Caco-2 (cell line): ENCODE measurements at regions of chr20 and their contacts with region 1.

Region 1: GRCh38 chr20:6492271-6493055 is 275.0 kb upstream of the BMP2 start:
- DNase-seq: peak; percentile 74 to 84
- H3K4me3 ChIP-seq: no peak overlapping the region
- H3K4me3 Mint-ChIP-seq: peak overlapping the region; percentile 6
- H3K27ac Mint-ChIP-seq: peak overlapping the region; percentile 87
- H3K4me1 ChIP-seq: peaks cover 54% of the 10 kb centered on the region
- H3K4me1 Mint-ChIP-seq: peaks cover 54% of the 10 kb centered on the region
- H3K27me3 ChIP-seq: no peaks in the 10 kb centered on the region
- H3K27me3 Mint-ChIP-seq: no peaks in the 10 kb centered on the region
- CTCF ChIP-seq: no peak

Region 2: DNA sequence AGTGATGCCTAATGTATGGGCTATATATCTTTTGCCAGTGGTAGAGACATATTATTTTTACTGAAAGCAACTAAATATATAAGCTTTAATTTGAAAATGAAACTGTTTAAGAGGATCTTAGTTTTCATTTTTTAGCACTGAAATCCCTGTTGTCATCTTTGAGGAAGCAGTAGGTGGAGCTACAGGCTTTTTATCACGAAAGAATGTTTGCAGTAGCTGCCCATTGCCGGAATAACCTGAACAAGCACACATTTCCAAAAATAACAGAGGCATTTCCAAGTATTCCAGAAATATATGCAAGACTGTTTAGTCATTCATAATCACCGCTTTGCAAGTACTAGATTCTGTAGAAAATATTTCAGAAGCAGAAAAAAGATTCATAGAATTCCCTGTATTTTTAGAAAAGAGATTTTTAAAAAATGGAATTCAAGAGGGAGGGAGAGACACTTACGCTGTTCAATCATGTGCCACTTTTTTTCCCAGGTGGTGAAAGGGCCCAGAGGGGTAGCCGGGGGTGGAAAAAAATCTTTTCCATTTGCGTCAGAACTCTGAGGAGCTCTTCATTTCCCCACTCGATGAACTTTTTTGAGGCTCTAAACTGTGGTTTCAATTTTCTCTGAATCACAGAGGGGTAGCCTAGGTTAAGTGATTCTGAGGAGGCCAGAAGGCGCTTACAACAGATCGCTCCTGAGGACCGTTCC is 227.1 kb before region 1 on chr20:
- CTCF ChIA-PET with region 1: no interaction called
- POLR2A ChIA-PET with region 1: no interaction called
- intact Hi-C with region 1: loop called (anchors 5 kb)
- DNase-seq: peak in 1 of 2 experiments; percentile 22
- H3K4me3 ChIP-seq: no peak overlapping the region
- H3K4me3 Mint-ChIP-seq: no peak overlapping the region
- H3K27ac Mint-ChIP-seq: no peak overlapping the region
- H3K4me1 ChIP-seq: no peaks in the 10 kb centered on the region
- H3K4me1 Mint-ChIP-seq: no peaks in the 10 kb centered on the region
- H3K27me3 ChIP-seq: no peaks in the 10 kb centered on the region; the same call in 1 of the 2 replicates
- H3K27me3 Mint-ChIP-seq: peaks cover 10% of the 10 kb centered on the region
- CTCF ChIP-seq: peak; percentile 48 to 62

Region 3: GRCh38 chr20:6480328-6481200 is 11.9 kb before region 1 on chr20:
- CTCF ChIA-PET with region 1: interaction called, 13 read pairs
- POLR2A ChIA-PET with region 1: interaction called, 3 read pairs
- intact Hi-C with region 1: loop called (anchors 1 kb)
- DNase-seq: peak in 1 of 2 experiments; percentile 61
- H3K4me3 ChIP-seq: no peak overlapping the region
- H3K4me3 Mint-ChIP-seq: no peak overlapping the region
- H3K27ac Mint-ChIP-seq: no peak overlapping the region
- H3K4me1 ChIP-seq: peaks cover 17% of the 10 kb centered on the region
- H3K4me1 Mint-ChIP-seq: peaks cover 13% of the 10 kb centered on the region
- H3K27me3 ChIP-seq: no peaks in the 10 kb centered on the region
- H3K27me3 Mint-ChIP-seq: no peaks in the 10 kb centered on the region
- CTCF ChIP-seq: no peak

Region 4: DNA sequence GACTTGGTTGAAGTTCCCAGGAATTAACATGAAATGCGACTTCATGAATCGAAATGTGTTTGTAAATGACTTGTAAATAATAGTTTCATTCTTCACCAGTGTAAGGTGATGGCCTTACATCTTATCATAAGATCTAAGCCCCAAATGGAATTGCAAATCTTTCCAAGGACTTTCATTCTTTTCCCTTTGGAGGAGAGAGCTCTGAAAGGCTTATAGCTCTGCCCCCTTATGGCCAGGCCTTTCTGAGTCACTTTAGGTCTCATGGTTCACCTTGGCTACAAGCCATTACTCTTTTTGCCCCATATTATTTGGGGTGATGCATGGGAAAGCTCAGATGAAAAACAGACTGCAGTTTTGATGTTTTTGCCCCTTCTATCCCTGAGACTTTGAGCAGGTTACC is 65.9 kb after region 1 on chr20:
- CTCF ChIA-PET with region 1: no interaction called
- POLR2A ChIA-PET with region 1: no interaction called
- intact Hi-C with region 1: loop called (anchors 1 kb)
- DNase-seq: peak in 1 of 2 experiments; percentile 25
- H3K4me3 ChIP-seq: no peak overlapping the region
- H3K4me3 Mint-ChIP-seq: no peak overlapping the region
- H3K27ac Mint-ChIP-seq: no peak overlapping the region
- H3K4me1 ChIP-seq: peaks cover 12% of the 10 kb centered on the region; the same call in 1 of the 2 replicates
- H3K4me1 Mint-ChIP-seq: no peaks in the 10 kb centered on the region
- H3K27me3 ChIP-seq: no peaks in the 10 kb centered on the region
- H3K27me3 Mint-ChIP-seq: no peaks in the 10 kb centered on the region
- CTCF ChIP-seq: peak; percentile 20 to 54

Region 5: GRCh38 chr20:6623989-6624388 is 131.5 kb after region 1 on chr20:
- CTCF ChIA-PET with region 1: no interaction called
- POLR2A ChIA-PET with region 1: interaction called, 3 read pairs
- intact Hi-C with region 1: loop called (anchors 2 kb)
- DNase-seq: peak; percentile 65 to 77
- H3K4me3 ChIP-seq: no peak overlapping the region
- H3K4me3 Mint-ChIP-seq: peak overlapping the region; percentile 51
- H3K27ac Mint-ChIP-seq: no peak overlapping the region
- H3K4me1 ChIP-seq: peaks cover 15% of the 10 kb centered on the region
- H3K4me1 Mint-ChIP-seq: no peaks in the 10 kb centered on the region
- H3K27me3 ChIP-seq: no peaks in the 10 kb centered on the region
- H3K27me3 Mint-ChIP-seq: no peaks in the 10 kb centered on the region
- CTCF ChIP-seq: no peak

Region 6: DNA sequence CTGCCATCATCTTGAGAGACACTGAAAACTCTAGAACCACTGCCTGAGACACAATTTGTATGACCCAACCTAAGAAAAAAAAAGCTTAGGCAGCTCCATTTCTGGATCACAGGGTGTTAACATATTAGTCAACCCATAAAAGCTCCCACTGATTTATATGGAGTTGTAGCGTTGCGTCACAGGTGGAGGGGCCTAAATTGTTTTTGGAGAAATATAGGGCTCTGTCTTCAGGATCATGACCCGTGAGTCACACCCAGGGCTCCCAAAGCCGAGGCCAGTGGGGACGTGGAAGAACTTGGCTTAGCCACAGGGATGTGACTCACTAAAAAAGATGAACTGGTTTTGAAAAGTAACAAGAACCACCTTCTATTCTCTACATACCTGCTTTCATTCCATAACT is 158.6 kb after region 1 on chr20:
- CTCF ChIA-PET with region 1: no interaction called
- POLR2A ChIA-PET with region 1: no interaction called
- intact Hi-C with region 1: no loop called
- DNase-seq: no peak
- H3K4me3 ChIP-seq: no peak overlapping the region
- H3K4me3 Mint-ChIP-seq: no peak overlapping the region
- H3K27ac Mint-ChIP-seq: no peak overlapping the region
- H3K4me1 ChIP-seq: peaks cover 9% of the 10 kb centered on the region; the same call in 1 of the 2 replicates
- H3K4me1 Mint-ChIP-seq: peaks cover 6% of the 10 kb centered on the region
- H3K27me3 ChIP-seq: no peaks in the 10 kb centered on the region
- H3K27me3 Mint-ChIP-seq: no peaks in the 10 kb centered on the region
- CTCF ChIP-seq: no peak

Region 7: DNA sequence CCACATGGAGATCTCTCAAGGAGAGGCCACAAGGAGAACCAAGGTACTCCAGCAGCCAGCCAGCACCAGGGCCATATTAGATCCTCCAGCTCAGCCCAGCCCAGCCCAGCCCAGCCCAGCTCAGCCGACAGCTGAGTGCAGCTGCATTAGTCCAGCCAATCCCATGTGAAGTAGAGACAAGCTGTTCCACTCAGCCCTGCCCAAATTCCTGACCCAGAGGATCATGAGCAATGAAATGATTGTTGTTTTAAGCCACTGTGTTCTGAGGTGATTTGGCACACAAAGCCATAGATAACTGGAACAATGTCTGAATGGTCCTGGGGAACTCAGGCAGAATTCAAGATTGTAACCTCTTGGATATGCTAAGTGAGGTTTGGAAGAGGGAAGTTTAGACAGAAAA is 215.5 kb after region 1 on chr20:
- CTCF ChIA-PET with region 1: no interaction called
- POLR2A ChIA-PET with region 1: interaction called, 3 read pairs
- intact Hi-C with region 1: loop called (anchors 1 kb)
- DNase-seq: peak; percentile 83 to 92
- H3K4me3 ChIP-seq: no peak overlapping the region
- H3K4me3 Mint-ChIP-seq: peak overlapping the region; percentile 57
- H3K27ac Mint-ChIP-seq: peak overlapping the region; percentile 89
- H3K4me1 ChIP-seq: peaks cover 92% of the 10 kb centered on the region
- H3K4me1 Mint-ChIP-seq: peaks cover 82% of the 10 kb centered on the region
- H3K27me3 ChIP-seq: no peaks in the 10 kb centered on the region
- H3K27me3 Mint-ChIP-seq: no peaks in the 10 kb centered on the region
- CTCF ChIP-seq: no peak

Region 8: GRCh38 chr20:6718651-6719368 is 226.3 kb after region 1 on chr20:
- CTCF ChIA-PET with region 1: no interaction called
- POLR2A ChIA-PET with region 1: no interaction called
- intact Hi-C with region 1: no loop called
- DNase-seq: peak in 1 of 2 experiments; percentile 45
- H3K4me3 ChIP-seq: no peak overlapping the region
- H3K4me3 Mint-ChIP-seq: no peak overlapping the region
- H3K27ac Mint-ChIP-seq: peak overlapping the region; percentile 20
- H3K4me1 ChIP-seq: peaks cover 28% of the 10 kb centered on the region
- H3K4me1 Mint-ChIP-seq: peaks cover 18% of the 10 kb centered on the region
- H3K27me3 ChIP-seq: no peaks in the 10 kb centered on the region
- H3K27me3 Mint-ChIP-seq: no peaks in the 10 kb centered on the region
- CTCF ChIP-seq: no peak

Region 9: DNA sequence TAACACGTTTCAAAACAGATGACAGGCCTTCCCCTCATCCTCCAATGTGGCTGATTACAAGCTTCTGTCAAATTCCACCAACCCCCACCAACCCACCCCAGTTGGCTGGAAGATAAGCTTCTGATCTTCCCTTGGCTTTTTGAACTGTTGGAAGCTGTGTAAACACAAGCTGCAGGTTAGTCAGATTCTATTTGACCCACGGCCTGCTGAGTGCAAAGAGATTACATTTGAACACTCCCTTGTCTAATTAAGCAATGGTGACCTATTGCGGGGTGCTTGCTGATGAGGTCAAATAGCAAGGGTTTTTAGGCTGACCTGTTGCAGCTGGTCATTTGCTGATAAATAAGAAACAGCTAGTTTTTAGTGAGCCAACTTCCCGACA is 654.7 kb after region 1 on chr20:
- CTCF ChIA-PET with region 1: no interaction called
- POLR2A ChIA-PET with region 1: no interaction called
- intact Hi-C with region 1: loop called (anchors 1 kb)
- DNase-seq: peak; percentile 82 to 89
- H3K4me3 ChIP-seq: no peak overlapping the region
- H3K4me3 Mint-ChIP-seq: peak overlapping the region; percentile 53
- H3K27ac Mint-ChIP-seq: peak overlapping the region; percentile 73
- H3K4me1 ChIP-seq: peaks cover 33% of the 10 kb centered on the region
- H3K4me1 Mint-ChIP-seq: peaks cover 43% of the 10 kb centered on the region
- H3K27me3 ChIP-seq: no peaks in the 10 kb centered on the region
- H3K27me3 Mint-ChIP-seq: no peaks in the 10 kb centered on the region
- CTCF ChIP-seq: no peak